WTC11 (cell line): ENCODE measurements at regions of chr2 and their contacts with region 1.

Region 1: GRCh38 chr2:135004005-135004746 is 43.1 kb downstream of the MAP3K19 start:
- DNase-seq: peak; percentile 81
- ATAC-seq: peak; percentile 95
- H3K4me3 Mint-ChIP-seq: no peak overlapping the region
- H3K27ac Mint-ChIP-seq: no peak overlapping the region
- H3K4me1 Mint-ChIP-seq: peaks cover 12% of the 10 kb centered on the region
- H3K27me3 Mint-ChIP-seq: peaks cover 8% of the 10 kb centered on the region
- CTCF ChIP-seq: peak; percentile 75; the same call in 1 of the 2 replicates

Region 2: GRCh38 chr2:134927195-134927594 is 77.0 kb before region 1 on chr2:
- CTCF ChIA-PET with region 1: no interaction called
- POLR2A ChIA-PET with region 1: no interaction called
- DNase-seq: no peak
- ATAC-seq: no peak
- H3K4me3 Mint-ChIP-seq: no peak overlapping the region
- H3K27ac Mint-ChIP-seq: no peak overlapping the region
- H3K4me1 Mint-ChIP-seq: peaks cover 38% of the 10 kb centered on the region
- H3K27me3 Mint-ChIP-seq: no peaks in the 10 kb centered on the region
- CTCF ChIP-seq: no peak

Region 3: DNA sequence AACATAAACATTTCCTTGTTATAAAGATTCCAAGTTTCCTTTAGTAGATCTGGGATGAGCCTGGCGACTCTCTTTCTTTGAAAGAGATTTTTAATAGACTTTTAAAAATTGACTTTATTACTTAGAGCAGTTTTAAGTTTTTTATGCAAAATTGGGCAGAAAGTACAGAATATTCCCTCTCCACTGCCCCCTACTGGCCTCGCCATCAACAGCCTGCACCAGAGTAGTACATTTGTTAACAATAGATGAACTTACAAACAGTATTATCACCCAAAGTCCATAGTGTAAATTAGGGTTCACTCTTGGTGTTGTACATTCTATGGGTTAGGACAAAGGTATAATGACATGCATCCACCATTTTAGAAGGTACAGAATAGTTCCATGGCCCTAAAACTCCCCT is 39.2 kb after region 1 on chr2:
- CTCF ChIA-PET with region 1: interaction called, 14 read pairs
- POLR2A ChIA-PET with region 1: no interaction called
- DNase-seq: peak; percentile 29
- ATAC-seq: no peak
- H3K4me3 Mint-ChIP-seq: no peak overlapping the region
- H3K27ac Mint-ChIP-seq: no peak overlapping the region
- H3K4me1 Mint-ChIP-seq: no peaks in the 10 kb centered on the region
- H3K27me3 Mint-ChIP-seq: no peaks in the 10 kb centered on the region
- CTCF ChIP-seq: peak; percentile 49; the same call in 1 of the 2 replicates

Region 4: GRCh38 chr2:135709992-135710391 is 705.8 kb after region 1 on chr2:
- CTCF ChIA-PET with region 1: interaction called, 12 read pairs
- POLR2A ChIA-PET with region 1: no interaction called
- DNase-seq: peak; percentile 62
- ATAC-seq: peak; percentile 58; the same call in 1 of the 2 replicates
- H3K4me3 Mint-ChIP-seq: no peak overlapping the region
- H3K27ac Mint-ChIP-seq: no peak overlapping the region; the same call in 1 of the 2 replicates
- H3K4me1 Mint-ChIP-seq: no peaks in the 10 kb centered on the region
- H3K27me3 Mint-ChIP-seq: no peaks in the 10 kb centered on the region
- CTCF ChIP-seq: peak; percentile 92